Heart right ventricle (tissue), 16 donors: ENCODE measurements at regions of chr12 and their contacts with region 1.

Region 1: GRCh38 chr12:93894391-93895088 is 217.4 kb downstream of the CRADD start:
- DNase-seq: peak; percentile 85 to 95
- ATAC-seq: peak; percentile 88 to 96 (median 90)
- H3K4me3 ChIP-seq: peak overlapping the region in 7 of 10 donors; percentile 7 to 35 (median 28)
- H3K27ac ChIP-seq: peak overlapping the region; percentile 70 to 94 (median 86)
- H3K4me1 ChIP-seq: peaks cover 20 to 55% (median 42%) of the 10 kb centered on the region in 9 donors
- H3K27me3 ChIP-seq: no peaks in the 10 kb centered on the region
- CTCF ChIP-seq: peak in 2 of 9 donors; percentile 5 to 8

Region 2: DNA sequence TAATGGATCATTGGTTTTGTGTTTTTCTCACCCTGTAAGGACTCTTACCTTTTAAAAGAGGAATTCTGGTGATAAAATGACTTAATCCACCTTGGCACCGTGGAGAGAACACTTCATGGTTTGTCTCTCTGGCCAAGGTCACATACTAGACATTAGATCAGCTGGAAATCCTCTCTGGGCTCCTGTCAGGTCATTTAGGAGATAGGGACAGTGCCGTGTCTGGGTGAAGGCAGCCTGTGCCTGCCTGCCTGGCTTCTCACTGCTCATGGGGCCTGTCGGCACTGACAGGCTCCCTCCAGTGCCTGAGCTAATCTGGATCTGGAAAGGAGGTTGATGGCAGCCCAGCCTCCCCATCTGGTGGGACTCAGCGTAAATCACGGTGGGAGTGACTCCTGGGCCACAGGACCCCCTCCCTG is 211.7 kb before region 1 on chr12:
- intact Hi-C with region 1: loop called in 3 of 10 experiments (anchors 5 to 10 kb)
- DNase-seq: peak; percentile 50 to 51
- ATAC-seq: peak; percentile 72 to 89 (median 84)
- H3K4me3 ChIP-seq: peak overlapping the region in 1 of 10 donors; percentile 15
- H3K27ac ChIP-seq: peak overlapping the region; percentile 56 to 99 (median 88)
- H3K4me1 ChIP-seq: peaks cover 3 to 86% (median 50%) of the 10 kb centered on the region in 9 donors
- H3K27me3 ChIP-seq: no peaks in the 10 kb centered on the region
- CTCF ChIP-seq: no peak

Region 3: DNA sequence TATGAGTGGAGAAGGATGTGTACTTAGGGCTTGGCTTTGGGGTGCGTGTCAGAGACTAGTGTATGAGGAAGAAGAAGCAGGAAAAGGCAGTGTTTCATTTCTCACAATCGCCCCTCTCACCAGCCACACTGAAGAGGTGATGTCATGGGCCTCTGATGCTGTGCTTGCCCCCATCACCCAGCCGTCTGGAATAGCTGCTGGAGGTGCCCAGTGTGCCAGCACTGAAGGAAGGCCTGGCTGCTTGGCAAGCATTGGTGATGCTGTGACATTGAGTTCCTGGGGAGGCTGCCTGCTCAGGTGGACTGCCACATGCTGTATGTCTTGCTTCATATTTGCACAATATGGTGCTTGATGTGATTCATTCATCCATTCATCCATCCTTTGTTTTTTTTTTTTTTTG is 161.2 kb before region 1 on chr12:
- intact Hi-C with region 1: no loop called
- DNase-seq: peak; percentile 14 to 31
- ATAC-seq: peak; percentile 42 to 83 (median 62)
- H3K4me3 ChIP-seq: no peak overlapping the region
- H3K27ac ChIP-seq: no peak overlapping the region
- H3K4me1 ChIP-seq: peaks cover 0 to 26% (median 17%) of the 10 kb centered on the region in 9 donors
- H3K27me3 ChIP-seq: no peaks in the 10 kb centered on the region
- CTCF ChIP-seq: no peak

Region 4: DNA sequence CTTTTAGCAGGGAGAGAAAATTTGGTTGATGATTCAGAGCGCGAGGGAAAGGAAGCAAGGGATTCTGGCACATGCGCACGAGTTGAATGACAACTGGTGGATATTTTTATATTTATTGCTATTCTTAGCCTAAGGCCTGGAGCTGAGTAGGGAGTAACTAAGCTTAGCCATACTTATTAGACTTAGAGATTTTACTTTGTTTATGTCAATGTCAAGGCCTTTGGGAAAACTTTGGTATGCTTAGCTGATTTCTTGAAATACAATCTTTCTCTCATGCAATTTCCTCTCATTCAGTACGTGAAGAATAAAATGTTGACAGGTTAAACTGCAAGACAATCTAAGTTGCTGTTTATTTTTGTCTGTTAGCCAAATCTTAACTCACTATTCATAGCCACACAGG is 116.2 kb before region 1 on chr12:
- intact Hi-C with region 1: loop called in 5 of 10 experiments (anchors 5 to 10 kb)
- DNase-seq: peak in 1 of 2 donors; percentile 82
- ATAC-seq: peak; percentile 78 to 96 (median 92)
- H3K4me3 ChIP-seq: peak overlapping the region in 3 of 10 donors; percentile 3 to 18 (median 10)
- H3K27ac ChIP-seq: peak overlapping the region; percentile 72 to 93 (median 87)
- H3K4me1 ChIP-seq: peaks cover 16 to 62% (median 50%) of the 10 kb centered on the region in 9 donors
- H3K27me3 ChIP-seq: no peaks in the 10 kb centered on the region
- CTCF ChIP-seq: no peak

Region 5: GRCh38 chr12:93825931-93826555 is 68.5 kb before region 1 on chr12:
- intact Hi-C with region 1: loop called in 2 of 10 experiments (anchors 5 to 10 kb)
- DNase-seq: no peak
- ATAC-seq: peak in 4 of 8 donors; percentile 26 to 56 (median 33)
- H3K4me3 ChIP-seq: peak overlapping the region in 1 of 10 donors; percentile 7
- H3K27ac ChIP-seq: peak overlapping the region; percentile 9 to 75 (median 52)
- H3K4me1 ChIP-seq: peaks cover 20 to 79% (median 51%) of the 10 kb centered on the region in 9 donors
- H3K27me3 ChIP-seq: no peaks in the 10 kb centered on the region
- CTCF ChIP-seq: no peak

Region 6: DNA sequence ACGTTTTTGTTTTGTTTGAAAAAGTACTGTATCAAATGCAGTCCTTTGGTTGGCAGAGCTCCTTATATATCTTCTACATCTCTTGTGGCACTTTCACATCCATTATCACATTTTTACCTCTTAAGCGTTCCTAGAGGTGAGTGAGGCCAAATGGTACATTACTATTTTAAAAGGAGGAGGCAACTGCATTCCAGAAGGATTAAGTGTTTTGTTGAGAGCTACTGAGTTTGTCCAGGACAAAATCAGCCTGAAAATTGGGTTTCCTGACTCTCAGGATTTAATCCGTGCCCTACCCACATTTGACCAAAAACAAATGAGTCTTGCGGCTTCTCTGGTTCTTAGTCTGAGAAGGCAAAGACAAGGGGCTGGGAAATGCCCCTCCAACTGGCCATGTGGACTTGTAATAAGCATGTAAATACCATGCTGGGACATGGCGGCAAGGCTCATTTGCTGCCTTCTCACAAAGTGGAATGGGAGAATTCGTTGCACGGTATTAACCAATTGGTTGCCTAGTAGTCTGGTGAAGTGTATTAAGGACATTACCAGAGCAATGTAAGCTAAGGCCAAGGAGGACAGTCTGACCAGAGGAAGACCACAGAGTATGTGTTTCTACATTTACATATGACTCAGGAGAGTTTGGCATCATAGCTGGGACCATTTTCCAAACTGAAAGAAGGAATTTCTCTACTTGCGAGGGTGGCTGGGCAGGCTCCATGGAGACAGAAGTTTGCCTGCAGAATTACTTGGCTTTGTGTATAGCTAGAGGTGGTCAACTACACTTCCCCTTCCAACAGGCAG is 78.1 kb after region 1 on chr12:
- intact Hi-C with region 1: loop called in 2 of 10 experiments (anchors 5 kb)
- DNase-seq: no peak
- ATAC-seq: peak in 1 of 8 donors; percentile 34
- H3K4me3 ChIP-seq: no peak overlapping the region
- H3K27ac ChIP-seq: peak overlapping the region in 1 of 10 donors; percentile 5
- H3K4me1 ChIP-seq: peaks cover 0 to 26% (median 5%) of the 10 kb centered on the region in 9 donors
- H3K27me3 ChIP-seq: no peaks in the 10 kb centered on the region
- CTCF ChIP-seq: no peak

Region 7: DNA sequence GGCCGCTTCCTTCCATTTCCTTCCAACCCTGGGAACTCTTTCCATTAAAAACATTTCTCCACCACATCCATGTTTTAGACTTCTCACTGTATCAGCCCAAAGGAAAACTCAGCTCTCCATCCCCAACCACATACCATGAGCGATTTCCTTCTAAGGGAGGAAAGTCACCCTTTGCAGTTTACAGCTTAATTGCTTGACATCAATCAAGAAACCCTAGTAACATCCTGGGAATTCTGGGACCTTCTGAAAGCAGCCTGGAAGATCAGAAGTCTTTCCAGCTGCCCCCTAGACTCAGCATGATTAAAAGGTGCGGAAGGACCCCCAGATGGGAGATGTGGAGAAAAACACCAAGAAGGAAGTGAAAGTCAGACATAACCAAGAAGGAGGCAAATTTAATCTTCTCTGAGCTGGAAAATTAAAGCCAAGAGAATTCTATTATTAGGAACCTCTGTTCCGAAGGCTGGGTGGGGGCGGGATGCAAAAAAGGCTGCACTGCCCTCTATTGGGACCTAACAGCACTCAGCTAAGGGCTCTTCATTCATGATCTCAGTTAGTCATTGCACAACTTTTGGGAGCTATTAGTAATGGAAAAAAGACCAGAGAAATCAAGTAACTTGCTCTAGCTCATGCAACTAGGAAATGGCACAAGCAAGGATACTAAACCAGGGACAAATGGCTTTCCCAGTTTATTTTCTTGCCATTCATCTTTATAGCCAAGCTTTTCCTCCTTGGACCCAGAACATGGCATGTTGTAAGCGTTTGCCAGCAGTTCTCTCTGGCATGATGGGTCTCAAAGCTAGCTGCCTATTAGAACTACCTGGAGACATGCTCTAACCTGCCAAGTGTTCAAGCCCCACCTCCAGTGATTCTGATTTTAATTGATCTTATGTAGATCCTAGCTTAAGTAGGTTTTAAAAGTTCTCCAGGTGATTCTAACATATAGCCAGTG is 180.7 kb after region 1 on chr12:
- intact Hi-C with region 1: loop called in 3 of 10 experiments (anchors 1 to 10 kb)
- DNase-seq: peak; percentile 57 to 73
- ATAC-seq: peak; percentile 81 to 94 (median 90)
- H3K4me3 ChIP-seq: peak overlapping the region in 4 of 10 donors; percentile 3 to 25 (median 14)
- H3K27ac ChIP-seq: peak overlapping the region; percentile 68 to 94 (median 89)
- H3K4me1 ChIP-seq: peaks cover 8 to 33% (median 21%) of the 10 kb centered on the region in 9 donors
- H3K27me3 ChIP-seq: no peaks in the 10 kb centered on the region
- CTCF ChIP-seq: peak; percentile 48 to 84 (median 73)

Region 8: GRCh38 chr12:94101738-94102660 is 207.5 kb after region 1 on chr12:
- intact Hi-C with region 1: loop called in 1 of 10 experiments (anchors 2 kb)
- DNase-seq: peak; percentile 78 to 88
- ATAC-seq: peak; percentile 83 to 94 (median 90)
- H3K4me3 ChIP-seq: peak overlapping the region; percentile 16 to 90 (median 66)
- H3K27ac ChIP-seq: peak overlapping the region in 8 of 10 donors; percentile 2 to 80 (median 68)
- H3K4me1 ChIP-seq: peaks cover 0 to 26% (median 12%) of the 10 kb centered on the region in 9 donors
- H3K27me3 ChIP-seq: peaks cover 0 to 21% (median 0%) of the 10 kb centered on the region in 7 donors
- CTCF ChIP-seq: peak; percentile 61 to 94 (median 86)

Region 9: GRCh38 chr12:94297876-94298505 is 403.5 kb after region 1 on chr12:
- intact Hi-C with region 1: no loop called
- DNase-seq: no peak
- ATAC-seq: no peak
- H3K4me3 ChIP-seq: no peak overlapping the region
- H3K27ac ChIP-seq: no peak overlapping the region
- H3K4me1 ChIP-seq: peaks cover 0 to 20% (median 14%) of the 10 kb centered on the region in 9 donors
- H3K27me3 ChIP-seq: no peaks in the 10 kb centered on the region
- CTCF ChIP-seq: no peak